CD8-positive, alpha-beta T cell (primary cell): ENCODE measurements at regions of chr1 and their contacts with region 1.

Region 1: GRCh38 chr1:54052934-54053744 is at the starts of genes TCEANC2 and TMEM59:
- DNase-seq: peak; percentile 94 to 100 (median 97)
- ATAC-seq: peak; percentile 89
- H3K4me3 ChIP-seq: peak within 1 kb of the TSS; percentile 87 to 89
- H3K4me3 Mint-ChIP-seq: no peak within 1 kb of the TSS
- H3K27ac ChIP-seq: peak within 1 kb of the TSS; percentile 89 to 93
- H3K27ac Mint-ChIP-seq: no peak within 1 kb of the TSS
- H3K4me1 ChIP-seq: peaks cover 39% of the 10 kb centered on the region
- H3K4me1 Mint-ChIP-seq: peaks cover 51% of the 10 kb centered on the region
- H3K27me3 ChIP-seq: no peaks in the 10 kb centered on the region
- H3K27me3 Mint-ChIP-seq: no peaks in the 10 kb centered on the region
- CTCF ChIP-seq: no peak
- total RNA-seq, gene TCEANC2: 1.8 to 2.1 TPM
- total RNA-seq, gene TMEM59: 125 to 142 TPM

Region 2: GRCh38 chr1:53220171-53220961 is 832.8 kb before region 1 on chr1 and contains the start of gene CZIB:
- CTCF ChIA-PET with region 1: no interaction called
- POLR2A ChIA-PET with region 1: no interaction called
- intact Hi-C with region 1: loop called in 1 of 2 experiments (anchors 10 kb)
- DNase-seq: peak; percentile 83 to 95 (median 92)
- ATAC-seq: peak; percentile 92
- H3K4me3 ChIP-seq: peak within 1 kb of the TSS; percentile 80 to 92
- H3K4me3 Mint-ChIP-seq: peak within 1 kb of the TSS; percentile 94
- H3K27ac ChIP-seq: peak within 1 kb of the TSS; percentile 94
- H3K27ac Mint-ChIP-seq: peak within 1 kb of the TSS; percentile 98
- H3K4me1 ChIP-seq: peaks cover 16% of the 10 kb centered on the region
- H3K4me1 Mint-ChIP-seq: peaks cover 18% of the 10 kb centered on the region
- H3K27me3 ChIP-seq: no peaks in the 10 kb centered on the region
- H3K27me3 Mint-ChIP-seq: no peaks in the 10 kb centered on the region
- CTCF ChIP-seq: no peak
- total RNA-seq, gene CZIB: 26.7 to 27.4 TPM

Region 3: DNA sequence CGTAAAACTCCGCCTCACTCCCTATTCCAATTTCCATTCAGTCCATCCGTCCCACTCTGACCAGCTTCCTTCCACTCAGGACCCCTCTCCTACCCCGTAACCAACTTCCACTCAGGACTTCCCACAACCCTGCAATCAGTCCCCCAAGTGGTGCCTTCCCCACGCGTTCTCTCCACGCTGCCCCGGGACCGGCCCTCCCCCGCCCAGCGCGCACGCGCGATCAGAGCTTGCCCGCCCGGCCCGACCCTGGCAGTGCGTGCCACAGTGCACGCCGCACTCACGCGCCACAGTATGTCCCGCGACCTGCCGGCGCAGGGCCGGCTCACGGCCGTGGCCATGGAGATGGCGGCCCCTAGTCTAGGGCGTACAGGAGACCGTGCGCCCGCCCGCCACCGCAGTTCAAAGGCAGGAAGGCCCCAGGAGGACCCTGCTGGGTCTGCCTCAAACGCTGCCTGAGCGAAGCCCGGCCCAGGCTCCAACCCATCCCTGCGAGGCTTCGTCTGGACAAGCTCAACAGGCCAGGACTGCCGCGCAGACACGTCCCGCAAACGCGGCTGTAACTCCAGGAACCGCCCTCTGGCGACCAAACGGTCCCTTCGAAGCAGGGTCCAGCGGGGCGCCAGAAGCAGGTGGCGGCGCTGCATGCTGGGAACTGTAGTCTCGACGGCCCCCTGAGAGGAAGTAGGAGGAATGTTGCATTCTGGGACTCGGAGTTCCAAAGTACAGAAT is 215.1 kb before region 1 on chr1 and contains the start of gene NDC1:
- CTCF ChIA-PET with region 1: no interaction called
- POLR2A ChIA-PET with region 1: interaction called, 3 read pairs
- intact Hi-C with region 1: loop called (anchors 1 kb)
- DNase-seq: peak; percentile 77 to 96 (median 88)
- ATAC-seq: peak; percentile 90
- H3K4me3 ChIP-seq: peak within 1 kb of the TSS; percentile 82 to 93
- H3K4me3 Mint-ChIP-seq: peak within 1 kb of the TSS; percentile 91
- H3K27ac ChIP-seq: peak within 1 kb of the TSS; percentile 91 to 100
- H3K27ac Mint-ChIP-seq: peak within 1 kb of the TSS; percentile 98
- H3K4me1 ChIP-seq: peaks cover 16% of the 10 kb centered on the region
- H3K4me1 Mint-ChIP-seq: peaks cover 26% of the 10 kb centered on the region
- H3K27me3 ChIP-seq: no peaks in the 10 kb centered on the region
- H3K27me3 Mint-ChIP-seq: peaks cover 3% of the 10 kb centered on the region
- CTCF ChIP-seq: no peak
- total RNA-seq, gene NDC1: 6.1 to 6.6 TPM

Region 4: GRCh38 chr1:54070171-54070837 is 17.2 kb after region 1 on chr1:
- CTCF ChIA-PET with region 1: interaction called, 3 read pairs
- POLR2A ChIA-PET with region 1: no interaction called
- intact Hi-C with region 1: loop called in 1 of 2 experiments (anchors 1 kb)
- DNase-seq: peak in 2 of 9 experiments; percentile 62 to 75
- ATAC-seq: peak; percentile 89
- H3K4me3 ChIP-seq: no peak overlapping the region
- H3K4me3 Mint-ChIP-seq: no peak overlapping the region
- H3K27ac ChIP-seq: no peak overlapping the region
- H3K27ac Mint-ChIP-seq: no peak overlapping the region
- H3K4me1 ChIP-seq: no peaks in the 10 kb centered on the region
- H3K4me1 Mint-ChIP-seq: no peaks in the 10 kb centered on the region
- H3K27me3 ChIP-seq: no peaks in the 10 kb centered on the region
- H3K27me3 Mint-ChIP-seq: no peaks in the 10 kb centered on the region
- CTCF ChIP-seq: peak; percentile 85

Region 5: DNA sequence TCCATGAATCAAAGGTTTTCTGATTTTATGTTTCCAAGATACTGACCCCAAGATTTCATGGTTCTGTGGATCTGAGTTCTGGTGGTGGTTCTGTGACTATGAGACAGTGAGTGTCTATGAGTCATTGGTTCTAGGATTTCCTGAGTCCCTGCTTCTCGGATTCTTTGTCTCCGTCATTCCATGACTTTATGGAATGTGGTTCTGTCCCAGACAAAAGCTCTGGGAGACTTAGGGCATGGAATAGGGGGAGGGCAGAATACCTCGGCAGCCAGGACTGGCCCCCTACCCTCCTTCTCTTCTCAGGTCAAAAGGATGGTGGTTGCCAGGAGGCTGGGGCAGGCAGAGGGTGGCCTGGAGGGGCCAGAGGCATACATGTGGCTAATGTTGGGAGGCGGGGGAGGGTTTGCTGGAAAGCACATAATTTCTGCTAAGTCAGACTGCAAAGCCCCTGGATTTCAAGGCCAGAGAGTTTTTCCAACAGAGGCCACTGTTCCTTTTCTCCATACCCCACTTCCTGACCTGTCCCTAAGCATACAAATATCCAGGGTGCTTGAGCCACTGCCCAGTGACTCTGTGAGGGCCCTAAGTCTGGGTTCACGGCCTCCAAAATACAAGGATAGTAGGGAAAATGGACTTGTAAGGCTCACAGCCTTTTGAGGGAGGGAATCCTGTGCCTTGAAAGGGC is 82.4 kb after region 1 on chr1:
- CTCF ChIA-PET with region 1: no interaction called
- POLR2A ChIA-PET with region 1: no interaction called
- intact Hi-C with region 1: no loop called
- DNase-seq: no peak
- ATAC-seq: no peak
- H3K4me3 ChIP-seq: no peak overlapping the region
- H3K4me3 Mint-ChIP-seq: no peak overlapping the region
- H3K27ac ChIP-seq: no peak overlapping the region
- H3K27ac Mint-ChIP-seq: no peak overlapping the region
- H3K4me1 ChIP-seq: no peaks in the 10 kb centered on the region
- H3K4me1 Mint-ChIP-seq: no peaks in the 10 kb centered on the region
- H3K27me3 ChIP-seq: no peaks in the 10 kb centered on the region
- H3K27me3 Mint-ChIP-seq: no peaks in the 10 kb centered on the region
- CTCF ChIP-seq: no peak

Region 6: GRCh38 chr1:54764133-54764921 is 711.2 kb after region 1 on chr1 and contains the start of gene PARS2:
- CTCF ChIA-PET with region 1: no interaction called
- POLR2A ChIA-PET with region 1: no interaction called
- intact Hi-C with region 1: loop called (anchors 1 kb)
- DNase-seq: peak; percentile 86 to 99 (median 95)
- ATAC-seq: peak; percentile 93
- H3K4me3 ChIP-seq: peak within 1 kb of the TSS; percentile 87 to 97
- H3K4me3 Mint-ChIP-seq: peak within 1 kb of the TSS; percentile 96
- H3K27ac ChIP-seq: peak within 1 kb of the TSS; percentile 62 to 65
- H3K27ac Mint-ChIP-seq: peak within 1 kb of the TSS; percentile 91
- H3K4me1 ChIP-seq: peaks cover 10% of the 10 kb centered on the region
- H3K4me1 Mint-ChIP-seq: peaks cover 20% of the 10 kb centered on the region
- H3K27me3 ChIP-seq: no peaks in the 10 kb centered on the region
- H3K27me3 Mint-ChIP-seq: no peaks in the 10 kb centered on the region
- CTCF ChIP-seq: no peak
- total RNA-seq, gene PARS2: not detected